Mammary epithelial cell (primary cell): ENCODE measurements at regions of chr7 and their contacts with region 1.

Region 1: GRCh38 chr7:54664235-54665228 is 94.5 kb downstream of the SEC61G start:
- DNase-seq: peak; percentile 66
- H3K4me3 ChIP-seq: peak overlapping the region; percentile 19 to 51 (median 50)
- H3K27ac ChIP-seq: no peak overlapping the region
- H3K4me1 ChIP-seq: peaks cover 8% of the 10 kb centered on the region
- H3K27me3 ChIP-seq: peaks cover 19% of the 10 kb centered on the region
- CTCF ChIP-seq: peak; percentile 45 to 89

Region 2: GRCh38 chr7:54473783-54474182 is 190.7 kb before region 1 on chr7:
- CTCF ChIA-PET with region 1: interaction called, 11 read pairs
- dilution Hi-C with region 1: no loop called
- in situ Hi-C with region 1: no loop called
- intact Hi-C with region 1: no loop called
- DNase-seq: no peak
- H3K4me3 ChIP-seq: no peak overlapping the region
- H3K27ac ChIP-seq: no peak overlapping the region
- H3K4me1 ChIP-seq: no peaks in the 10 kb centered on the region
- H3K27me3 ChIP-seq: peaks cover 2% of the 10 kb centered on the region
- CTCF ChIP-seq: no peak

Region 3: GRCh38 chr7:54546081-54546985 is 118.2 kb before region 1 on chr7:
- CTCF ChIA-PET with region 1: no interaction called
- dilution Hi-C with region 1: no loop called
- in situ Hi-C with region 1: no loop called
- intact Hi-C with region 1: loop called (anchors 2 kb)
- DNase-seq: no peak
- H3K4me3 ChIP-seq: peak overlapping the region in 2 of 3 experiments; percentile 23 to 25
- H3K27ac ChIP-seq: no peak overlapping the region
- H3K4me1 ChIP-seq: peaks cover 12% of the 10 kb centered on the region
- H3K27me3 ChIP-seq: peaks cover 56% of the 10 kb centered on the region
- CTCF ChIP-seq: peak; percentile 7 to 44

Region 4: GRCh38 chr7:54615537-54615936 is 49.0 kb before region 1 on chr7:
- CTCF ChIA-PET with region 1: no interaction called
- dilution Hi-C with region 1: no loop called
- in situ Hi-C with region 1: no loop called
- intact Hi-C with region 1: loop called (anchors 2 kb)
- DNase-seq: peak; percentile 89
- H3K4me3 ChIP-seq: no peak overlapping the region
- H3K27ac ChIP-seq: no peak overlapping the region
- H3K4me1 ChIP-seq: peaks cover 11% of the 10 kb centered on the region
- H3K27me3 ChIP-seq: no peaks in the 10 kb centered on the region
- CTCF ChIP-seq: no peak

Region 5: GRCh38 chr7:54689394-54690049 is 25.0 kb after region 1 on chr7:
- CTCF ChIA-PET with region 1: no interaction called
- dilution Hi-C with region 1: no loop called
- in situ Hi-C with region 1: no loop called
- intact Hi-C with region 1: no loop called
- DNase-seq: no peak
- H3K4me3 ChIP-seq: no peak overlapping the region
- H3K27ac ChIP-seq: no peak overlapping the region
- H3K4me1 ChIP-seq: no peaks in the 10 kb centered on the region
- H3K27me3 ChIP-seq: peaks cover 6% of the 10 kb centered on the region
- CTCF ChIP-seq: no peak